GM12878 (cell line): ENCODE measurements at regions of chr2 and their contacts with region 1.

Region 1: DNA sequence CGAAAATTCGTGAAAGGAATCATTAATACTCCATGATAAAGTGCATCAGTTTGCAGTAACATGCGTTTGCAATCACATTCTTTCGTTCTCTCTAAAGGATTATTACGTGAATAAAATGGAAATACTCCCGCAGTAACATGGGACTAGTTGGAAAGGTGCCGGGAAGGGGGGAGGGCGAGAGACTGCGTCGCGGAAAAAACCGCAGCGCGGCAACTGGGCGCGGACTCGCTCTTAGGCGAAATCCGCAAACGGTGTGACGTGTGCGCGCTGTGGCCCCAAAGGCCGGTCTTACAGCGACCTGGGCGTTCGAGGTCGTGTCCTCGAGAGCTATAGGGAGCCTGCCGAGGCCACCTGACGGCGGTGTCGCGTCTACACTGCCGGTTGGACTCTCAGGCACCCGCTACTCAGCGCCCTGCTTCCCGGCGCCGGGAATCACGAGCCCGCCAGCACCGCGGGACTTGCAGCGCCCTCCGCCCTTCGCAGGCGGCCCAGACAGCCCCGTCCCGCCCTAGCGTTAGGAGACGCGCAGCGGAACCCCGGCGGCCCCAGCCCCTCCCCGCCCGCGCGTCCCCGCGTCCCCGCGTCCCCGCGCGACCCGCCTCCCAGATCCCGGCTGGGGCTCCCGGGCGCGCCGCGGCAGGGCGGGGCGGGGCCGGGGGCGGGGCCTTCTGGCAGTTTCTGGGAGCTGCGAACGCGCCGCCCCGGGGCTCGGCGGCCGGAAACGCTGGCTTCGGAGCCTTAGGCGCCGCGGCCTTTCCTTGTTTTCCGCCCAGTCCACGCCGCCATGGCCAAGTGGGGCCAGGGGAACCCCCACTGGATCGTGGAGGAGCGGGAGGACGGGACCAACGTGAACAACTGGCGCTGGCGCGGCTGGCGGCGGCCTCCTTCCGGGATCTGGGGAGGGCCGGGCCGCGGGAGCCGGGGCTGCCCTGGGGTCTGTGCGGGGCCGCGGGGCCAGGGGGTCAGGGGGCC is 15.1 kb downstream of the C2orf74 start:
- DNase-seq: peak; percentile 40
- ATAC-seq: peak; percentile 84
- H3K4me3 ChIP-seq: peak overlapping the region; percentile 99
- H3K27ac ChIP-seq: peak overlapping the region; percentile 91
- H3K4me1 ChIP-seq: peaks cover 14% of the 10 kb centered on the region
- H3K27me3 ChIP-seq: no peaks in the 10 kb centered on the region
- CTCF ChIP-seq: peak in 2 of 3 experiments; percentile 7 to 12; a peak in 1 of 6 replicates
- EP300 ChIP-seq: no peak
- POLR2A ChIP-seq: peak; percentile 95
- RAD21 ChIP-seq: no peak

Region 2: DNA sequence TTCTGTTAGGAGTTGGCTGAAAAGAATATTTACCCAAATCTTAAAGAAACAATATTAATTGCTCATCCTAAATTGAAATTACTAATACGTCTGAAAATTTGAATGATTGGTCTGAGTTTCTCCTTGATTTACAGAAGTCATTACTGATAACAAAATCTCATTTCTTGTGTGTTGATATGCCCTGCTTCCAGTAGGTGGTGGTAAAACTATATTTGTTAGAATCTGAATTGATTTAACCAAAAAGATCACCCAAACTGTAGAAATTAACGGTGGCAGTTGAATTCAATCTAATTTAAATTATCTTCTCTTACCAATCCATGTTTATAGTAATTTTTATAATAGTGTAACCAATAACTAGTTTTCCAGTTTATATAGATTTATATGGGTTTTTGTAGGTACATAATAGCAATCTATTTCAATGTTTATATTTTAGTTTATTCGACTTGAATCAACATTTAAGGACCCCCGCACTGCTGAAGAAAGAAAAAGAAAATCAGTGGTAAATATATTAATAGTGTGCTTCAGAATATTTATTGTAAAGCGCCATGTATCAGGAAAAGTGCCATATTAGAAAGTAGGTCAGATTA is 382.7 kb before region 1 on chr2:
- CTCF ChIA-PET with region 1: no interaction called
- POLR2A ChIA-PET with region 1: no interaction called
- RAD21 ChIA-PET with region 1: no interaction called
- SMC1A ChIA-PET with region 1: interaction called, 3 read pairs
- in situ Hi-C with region 1: no loop called
- intact Hi-C with region 1: loop called (anchors 10 kb)
- DNase-seq: no peak
- ATAC-seq: peak; percentile 51; the same call in 2 of the 3 replicates
- H3K4me3 ChIP-seq: no peak overlapping the region
- H3K27ac ChIP-seq: no peak overlapping the region
- H3K4me1 ChIP-seq: peaks cover 16% of the 10 kb centered on the region
- H3K27me3 ChIP-seq: no peaks in the 10 kb centered on the region
- CTCF ChIP-seq: peak; percentile 33 to 73 (median 55); a peak in 4 of 6 replicates
- EP300 ChIP-seq: no peak
- POLR2A ChIP-seq: no peak
- RAD21 ChIP-seq: peak; percentile 81

Region 3: GRCh38 chr2:61016808-61017555 is 160.1 kb before region 1 on chr2:
- CTCF ChIA-PET with region 1: interaction called, 3 read pairs
- POLR2A ChIA-PET with region 1: interaction called, 7 read pairs
- RAD21 ChIA-PET with region 1: interaction called, 3 read pairs
- SMC1A ChIA-PET with region 1: interaction called, 3 read pairs
- in situ Hi-C with region 1: no loop called
- intact Hi-C with region 1: loop called (anchors 1 kb)
- DNase-seq: peak; percentile 68
- ATAC-seq: peak; percentile 80
- H3K4me3 ChIP-seq: peak overlapping the region; percentile 97
- H3K27ac ChIP-seq: peak overlapping the region; percentile 96
- H3K4me1 ChIP-seq: peaks cover 4% of the 10 kb centered on the region; the same call in 1 of the 2 replicates
- H3K27me3 ChIP-seq: no peaks in the 10 kb centered on the region
- CTCF ChIP-seq: no peak
- EP300 ChIP-seq: no peak
- POLR2A ChIP-seq: 0 out of 2 replicates have a peak, but pooled peaks have one; percentile 21
- RAD21 ChIP-seq: no peak

Region 4: DNA sequence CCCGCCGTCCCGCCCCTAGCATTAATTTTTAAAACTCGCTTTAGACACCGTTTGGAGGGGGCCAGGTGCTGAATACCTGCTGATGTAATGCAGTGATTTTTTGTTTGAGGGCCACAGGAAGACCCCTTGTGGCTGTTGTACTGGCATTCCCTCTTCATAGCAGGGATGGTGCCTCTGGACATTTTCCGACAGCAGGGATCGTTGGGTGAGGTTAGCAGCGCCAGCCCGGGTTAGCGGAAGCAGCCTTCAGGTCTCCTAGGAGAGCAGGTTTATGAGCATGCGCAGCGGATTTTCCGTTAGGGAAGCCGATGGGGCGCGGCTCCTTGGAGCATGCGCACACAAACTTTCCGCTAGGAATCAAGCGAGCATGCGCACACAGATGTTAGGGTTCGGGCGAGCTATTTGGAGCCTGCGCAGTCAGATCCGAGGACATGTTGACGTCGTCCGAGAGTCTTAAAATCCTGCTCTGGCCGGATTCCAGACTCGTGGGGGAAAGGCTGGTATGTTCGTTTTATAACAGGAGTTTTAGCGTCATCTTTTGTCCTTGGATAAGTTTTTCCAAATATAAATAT is 32.3 kb before region 1 on chr2:
- CTCF ChIA-PET with region 1: interaction called, 10 read pairs
- POLR2A ChIA-PET with region 1: interaction called, 10 read pairs
- RAD21 ChIA-PET with region 1: interaction called, 4 read pairs
- SMC1A ChIA-PET with region 1: interaction called, 10 read pairs
- in situ Hi-C with region 1: no loop called
- intact Hi-C with region 1: loop called (anchors 2 kb)
- DNase-seq: peak; percentile 99
- ATAC-seq: peak; percentile 96
- H3K4me3 ChIP-seq: peak overlapping the region; percentile 89
- H3K27ac ChIP-seq: peak overlapping the region; percentile 74
- H3K4me1 ChIP-seq: no peaks in the 10 kb centered on the region
- H3K27me3 ChIP-seq: no peaks in the 10 kb centered on the region
- CTCF ChIP-seq: no peak
- EP300 ChIP-seq: no peak
- POLR2A ChIP-seq: peak; percentile 85
- RAD21 ChIP-seq: no peak

Region 5: GRCh38 chr2:61247204-61247812 is 70.3 kb after region 1 on chr2:
- CTCF ChIA-PET with region 1: no interaction called
- POLR2A ChIA-PET with region 1: no interaction called
- RAD21 ChIA-PET with region 1: no interaction called
- SMC1A ChIA-PET with region 1: no interaction called
- in situ Hi-C with region 1: no loop called
- intact Hi-C with region 1: no loop called
- DNase-seq: no peak
- ATAC-seq: no peak
- H3K4me3 ChIP-seq: no peak overlapping the region
- H3K27ac ChIP-seq: no peak overlapping the region
- H3K4me1 ChIP-seq: no peaks in the 10 kb centered on the region
- H3K27me3 ChIP-seq: no peaks in the 10 kb centered on the region
- CTCF ChIP-seq: no peak
- EP300 ChIP-seq: no peak
- POLR2A ChIP-seq: no peak
- RAD21 ChIP-seq: no peak

Region 6: DNA sequence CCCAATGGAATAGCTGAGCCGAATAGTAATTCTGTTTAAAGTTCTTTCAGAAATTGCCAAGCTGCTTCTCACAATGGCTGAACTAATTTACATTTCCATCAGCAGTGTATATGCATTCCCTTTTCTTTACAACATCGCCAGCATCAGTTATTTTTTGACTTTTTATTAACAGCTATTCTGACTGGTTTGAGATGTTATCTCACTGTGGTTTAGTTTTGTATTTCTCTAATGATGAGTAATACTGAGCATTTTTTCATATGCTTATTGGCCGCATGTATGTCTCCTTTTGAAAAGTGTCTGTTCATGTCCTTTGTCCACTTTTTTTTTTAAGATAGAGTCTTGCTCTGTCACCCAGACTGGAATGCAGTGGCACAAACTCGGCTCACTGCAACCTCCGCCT is 85.7 kb after region 1 on chr2:
- CTCF ChIA-PET with region 1: no interaction called
- POLR2A ChIA-PET with region 1: no interaction called
- RAD21 ChIA-PET with region 1: no interaction called
- SMC1A ChIA-PET with region 1: no interaction called
- in situ Hi-C with region 1: no loop called
- intact Hi-C with region 1: no loop called
- DNase-seq: no peak
- ATAC-seq: no peak; the same call in 2 of the 3 replicates
- H3K4me3 ChIP-seq: no peak overlapping the region
- H3K27ac ChIP-seq: no peak overlapping the region
- H3K4me1 ChIP-seq: no peaks in the 10 kb centered on the region
- H3K27me3 ChIP-seq: no peaks in the 10 kb centered on the region
- CTCF ChIP-seq: no peak
- EP300 ChIP-seq: no peak
- POLR2A ChIP-seq: no peak
- RAD21 ChIP-seq: no peak